ENCODE measurements at regions of chr1 and their contacts with region 1.

Region 1: DNA sequence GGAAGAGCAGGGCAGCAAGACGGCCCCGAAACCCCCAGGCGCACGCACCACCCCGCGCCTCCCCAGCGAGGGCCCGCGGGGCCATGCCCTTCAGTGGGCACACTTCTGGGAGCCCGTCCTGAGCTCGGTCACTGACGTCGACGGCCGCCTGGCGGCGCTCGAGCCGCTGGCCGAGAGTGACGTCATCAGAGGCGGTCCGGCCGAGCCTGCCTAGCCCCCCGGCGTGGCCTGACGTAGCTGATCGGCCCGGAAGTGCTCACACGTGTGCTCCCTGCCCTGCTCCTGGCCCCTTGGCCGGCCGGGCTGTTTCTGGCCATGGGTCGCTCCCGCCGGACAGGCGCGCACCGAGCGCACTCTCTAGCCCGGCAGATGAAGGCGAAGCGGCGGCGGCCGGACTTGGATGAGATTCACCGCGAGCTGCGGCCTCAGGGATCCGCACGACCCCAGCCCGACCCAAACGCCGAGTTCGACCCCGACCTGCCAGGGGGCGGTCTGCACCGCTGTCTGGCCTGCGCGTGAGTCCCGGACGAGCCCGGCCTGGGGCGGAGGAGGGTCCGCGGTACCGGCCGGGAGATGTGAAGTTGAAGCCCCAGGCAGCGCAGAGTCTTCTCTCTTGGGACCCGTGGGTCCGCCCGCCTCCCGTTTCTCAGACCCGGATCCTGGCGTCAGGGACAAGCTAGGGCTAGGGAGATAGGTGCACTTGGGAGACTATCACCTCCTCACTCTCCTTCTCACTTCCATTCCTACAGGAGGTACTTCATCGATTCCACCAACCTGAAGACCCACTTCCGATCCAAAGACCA is at the start of gene ZNF593:
- DNase-seq: peak; percentile 98
- total RNA-seq, gene ZNF593: 14.9 to 17.6 TPM

Region 2: GRCh38 chr1:27804791-27805190 is 1634.9 kb after region 1 on chr1:
- intact Hi-C with region 1: loop called in 1 of 2 experiments (anchors 5 kb)
- DNase-seq: no peak